ENCODE measurements at regions of chr4 and their contacts with region 1.

Region 1: DNA sequence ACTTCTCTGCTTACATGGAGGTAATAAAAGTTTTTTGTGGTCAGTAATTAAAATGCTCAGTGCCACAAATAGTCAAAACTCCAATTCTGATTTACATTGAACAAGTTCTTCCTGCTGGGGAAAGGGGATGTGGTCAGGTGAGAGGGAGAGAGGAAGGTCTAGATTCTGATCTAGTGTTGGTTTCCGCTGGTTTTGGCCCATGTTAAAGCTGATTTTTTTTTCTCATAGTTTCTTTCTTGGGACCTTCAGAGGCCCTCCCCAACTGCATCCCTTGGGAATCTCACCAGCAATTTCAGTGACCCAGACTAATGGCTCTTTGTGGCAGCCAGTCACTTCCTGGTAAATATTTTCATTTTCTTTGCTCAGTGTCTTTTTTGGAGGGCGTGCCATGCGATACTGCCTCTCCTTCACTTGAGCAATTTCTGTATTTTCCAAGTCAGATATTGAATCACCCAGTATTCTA is 332.7 kb downstream of the RAPGEF2 start:
- DNase-seq: peak; percentile 42
- H3K4me3 ChIP-seq: no peak overlapping the region
- H3K27ac ChIP-seq: no peak overlapping the region
- H3K4me1 ChIP-seq: peaks cover 19% of the 10 kb centered on the region
- H3K27me3 ChIP-seq: no peaks in the 10 kb centered on the region
- CTCF ChIP-seq: no peak

Region 2: GRCh38 chr4:159410076-159410777 is 25.4 kb before region 1 on chr4:
- CTCF ChIA-PET with region 1: no interaction called
- dilution Hi-C with region 1: no loop called
- in situ Hi-C with region 1: no loop called
- intact Hi-C with region 1: loop called (anchors 1 kb)
- DNase-seq: peak; percentile 86
- H3K4me3 ChIP-seq: no peak overlapping the region
- H3K27ac ChIP-seq: peak overlapping the region; percentile 12
- H3K4me1 ChIP-seq: peaks cover 23% of the 10 kb centered on the region
- H3K27me3 ChIP-seq: no peaks in the 10 kb centered on the region
- CTCF ChIP-seq: no peak

Region 3: GRCh38 chr4:159464302-159464701 is 28.7 kb after region 1 on chr4:
- CTCF ChIA-PET with region 1: interaction called, 22 read pairs
- dilution Hi-C with region 1: no loop called
- in situ Hi-C with region 1: no loop called
- intact Hi-C with region 1: no loop called
- DNase-seq: no peak
- H3K4me3 ChIP-seq: no peak overlapping the region
- H3K27ac ChIP-seq: no peak overlapping the region
- H3K4me1 ChIP-seq: no peaks in the 10 kb centered on the region
- H3K27me3 ChIP-seq: no peaks in the 10 kb centered on the region
- CTCF ChIP-seq: no peak